Activated T-helper 1 cell treated with anti-CD3 and anti-CD28 coated beads, Interleukin-12 subunit alpha, Interleukin-12 subunit beta, Interleukin-2, Interleukin-4 antibody, amounts not matched to agents 30 ng/mL and 10 ng/mL and 1 ng/mL, durations not matched to agents 14 hours and 24 hours and 36 hours (primary cell): ENCODE measurements at regions of chr5 and their contacts with region 1.

Region 1: DNA sequence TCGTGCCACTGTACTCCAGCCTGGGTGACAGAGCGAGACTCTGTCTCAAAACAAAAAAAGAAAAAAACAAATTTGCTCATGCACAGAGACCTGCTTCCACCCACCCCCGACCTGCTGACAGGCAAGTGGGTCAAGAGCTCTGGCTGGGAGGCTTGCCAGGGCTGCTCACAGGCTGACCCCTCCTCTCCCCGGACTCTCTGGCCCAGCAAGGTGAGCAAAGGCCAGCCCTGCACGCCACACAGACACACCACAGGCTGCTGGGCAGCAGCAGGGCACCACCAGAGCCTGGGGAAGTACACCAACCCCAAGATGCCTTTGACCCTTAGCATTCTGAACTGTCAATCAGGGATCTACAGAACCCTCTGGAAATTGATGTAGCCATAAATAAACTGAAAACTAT is 29.2 kb downstream of the NSUN2 start:
- DNase-seq: no peak
- H3K4me3 Mint-ChIP-seq: no peak overlapping the region
- H3K27ac Mint-ChIP-seq: no peak overlapping the region
- H3K4me1 Mint-ChIP-seq: no peaks in the 10 kb centered on the region
- H3K27me3 Mint-ChIP-seq: no peaks in the 10 kb centered on the region

Region 2: DNA sequence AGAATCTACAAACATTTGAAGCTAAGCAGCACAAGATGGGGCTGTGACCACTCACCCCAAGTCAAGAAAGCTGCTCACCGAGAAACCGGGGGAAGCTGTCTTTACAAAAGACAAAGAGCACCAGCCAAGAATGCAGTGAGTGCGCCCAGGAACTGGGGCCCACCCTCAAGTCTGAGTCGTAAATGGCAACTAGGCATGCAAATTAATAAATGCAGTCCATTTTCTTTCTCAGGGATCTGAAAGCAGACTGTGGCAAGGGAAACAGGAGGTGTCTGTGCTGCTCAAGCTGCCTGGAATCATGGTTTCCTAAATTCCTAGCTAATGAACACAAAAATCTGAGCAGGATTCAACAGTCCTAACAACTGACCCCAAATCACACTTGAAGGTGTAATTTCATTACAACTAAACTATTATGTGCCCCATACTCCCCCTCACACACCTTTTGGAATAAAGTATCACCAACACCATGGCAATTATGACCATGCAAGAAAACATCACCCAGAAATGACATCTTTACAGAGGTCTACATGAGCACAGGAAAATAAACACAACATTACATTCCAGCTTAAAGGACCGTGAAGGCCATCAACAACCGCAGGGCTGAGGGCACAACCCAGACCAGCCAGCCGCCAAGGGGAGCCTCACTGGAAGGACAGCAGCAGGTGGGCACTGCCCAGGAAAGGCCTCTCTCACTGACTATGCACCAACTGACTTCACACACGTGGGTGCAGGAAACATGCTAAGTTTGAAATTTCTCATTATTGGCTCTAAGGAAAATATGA is 11.6 kb after region 1 on chr5:
- intact Hi-C with region 1: loop called (anchors 2 kb)
- DNase-seq: no peak
- H3K4me3 Mint-ChIP-seq: no peak overlapping the region
- H3K27ac Mint-ChIP-seq: peak overlapping the region; percentile 19
- H3K4me1 Mint-ChIP-seq: peaks cover 21% of the 10 kb centered on the region
- H3K27me3 Mint-ChIP-seq: no peaks in the 10 kb centered on the region